ENCODE measurements at regions of chr4 and their contacts with region 1.

Region 1: DNA sequence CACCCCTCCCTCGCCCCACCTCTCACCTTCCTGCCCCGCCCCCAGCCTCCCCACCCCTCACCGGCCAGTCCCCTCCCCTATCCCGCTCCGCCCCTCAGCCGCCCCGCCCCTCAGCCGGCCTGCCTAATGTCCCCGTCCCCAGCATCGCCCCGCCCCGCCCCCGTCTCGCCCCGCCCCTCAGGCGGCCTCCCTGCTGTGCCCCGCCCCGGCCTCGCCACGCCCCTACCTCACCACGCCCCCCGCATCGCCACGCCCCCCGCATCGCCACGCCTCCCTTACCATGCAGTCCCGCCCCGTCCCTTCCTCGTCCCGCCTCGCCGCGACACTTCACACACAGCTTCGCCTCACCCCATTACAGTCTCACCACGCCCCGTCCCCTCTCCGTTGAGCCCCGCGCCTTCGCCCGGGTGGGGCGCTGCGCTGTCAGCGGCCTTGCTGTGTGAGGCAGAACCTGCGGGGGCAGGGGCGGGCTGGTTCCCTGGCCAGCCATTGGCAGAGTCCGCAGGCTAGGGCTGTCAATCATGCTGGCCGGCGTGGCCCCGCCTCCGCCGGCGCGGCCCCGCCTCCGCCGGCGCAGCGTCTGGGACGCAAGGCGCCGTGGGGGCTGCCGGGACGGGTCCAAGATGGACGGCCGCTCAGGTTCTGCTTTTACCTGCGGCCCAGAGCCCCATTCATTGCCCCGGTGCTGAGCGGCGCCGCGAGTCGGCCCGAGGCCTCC is at the starts of genes HTT and HTT-AS:
- DNase-seq: peak; percentile 60
- ATAC-seq: peak; percentile 95
- H3K4me3 ChIP-seq: peak within 1 kb of the TSS; percentile 84 to 85
- H3K27ac ChIP-seq: peak within 1 kb of the TSS; percentile 74
- H3K4me1 ChIP-seq: peaks cover 11% of the 10 kb centered on the region; the same call in 1 of the 2 replicates
- H3K27me3 ChIP-seq: no peaks in the 10 kb centered on the region
- CTCF ChIP-seq: no peak
- total RNA-seq, gene HTT: 24.7 TPM
- total RNA-seq, gene HTT-AS: not detected

Region 2: DNA sequence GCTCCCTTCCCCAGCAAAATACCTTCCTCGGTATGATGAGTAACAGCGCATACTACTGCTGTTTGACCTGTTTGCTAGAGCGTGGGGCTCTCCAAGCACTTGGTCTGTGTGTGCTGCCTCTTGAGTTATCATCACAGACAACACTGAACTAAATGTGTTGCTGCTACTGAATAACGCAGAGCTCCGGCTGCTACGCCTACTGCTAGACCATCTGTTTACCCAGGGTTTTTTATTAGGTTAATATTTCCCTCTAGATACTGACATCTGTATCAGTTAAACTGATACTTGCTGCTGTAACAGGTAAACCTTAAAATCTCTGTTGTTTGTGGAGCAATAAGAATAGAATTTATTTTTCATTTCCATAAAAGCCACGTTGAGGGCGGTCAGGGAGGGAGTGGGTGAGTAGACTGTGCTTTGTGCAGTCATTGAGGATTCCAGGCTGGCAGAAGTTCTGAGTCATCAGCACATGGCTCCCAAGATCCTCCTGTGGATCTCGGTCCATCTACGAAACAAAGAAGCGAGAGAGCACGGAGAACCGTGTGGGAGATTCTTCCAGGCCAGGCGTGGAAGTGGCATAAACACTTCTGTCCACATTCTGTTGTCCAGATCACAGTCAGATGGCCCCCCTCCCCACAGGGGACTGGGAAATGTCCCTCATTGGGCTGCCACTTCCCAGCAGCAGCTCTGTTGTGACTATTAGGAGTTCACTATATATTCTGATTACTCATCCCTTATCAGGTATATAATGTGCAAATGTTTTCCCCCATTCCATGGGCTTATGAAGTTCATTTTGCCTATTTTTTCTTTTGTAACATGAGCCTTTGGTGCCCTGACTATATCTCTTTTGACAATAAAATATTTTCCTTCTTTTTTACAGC is 96.8 kb before region 1 on chr4:
- CTCF ChIA-PET with region 1: no interaction called
- POLR2A ChIA-PET with region 1: interaction called, 10 read pairs
- in situ Hi-C with region 1: no loop called
- intact Hi-C with region 1: no loop called
- DNase-seq: no peak
- ATAC-seq: no peak
- H3K4me3 ChIP-seq: no peak overlapping the region
- H3K27ac ChIP-seq: no peak overlapping the region
- H3K4me1 ChIP-seq: no peaks in the 10 kb centered on the region
- H3K27me3 ChIP-seq: no peaks in the 10 kb centered on the region
- CTCF ChIP-seq: no peak

Region 3: DNA sequence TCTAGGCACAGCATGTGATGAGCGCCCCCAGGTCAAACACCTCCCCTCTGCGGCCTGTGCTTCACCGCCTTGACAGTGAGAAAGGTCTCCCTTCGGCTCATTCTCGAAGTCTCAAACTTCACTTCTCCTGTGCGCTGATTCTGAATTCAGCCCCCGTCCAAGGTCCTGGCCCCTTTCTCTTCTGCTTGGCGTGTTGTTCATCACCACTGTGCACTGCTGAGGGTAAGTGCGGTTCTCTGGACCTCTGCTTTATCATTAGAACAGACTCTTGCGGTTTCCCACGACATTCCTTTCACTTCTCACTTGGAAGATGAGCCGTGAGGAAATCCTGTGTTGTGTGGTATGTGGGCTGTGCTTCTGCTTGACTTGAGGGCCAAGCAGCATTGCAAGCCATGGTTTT is 11.8 kb before region 1 on chr4:
- CTCF ChIA-PET with region 1: no interaction called
- POLR2A ChIA-PET with region 1: no interaction called
- in situ Hi-C with region 1: no loop called
- intact Hi-C with region 1: no loop called
- DNase-seq: no peak
- ATAC-seq: no peak
- H3K4me3 ChIP-seq: no peak overlapping the region
- H3K27ac ChIP-seq: no peak overlapping the region
- H3K4me1 ChIP-seq: no peaks in the 10 kb centered on the region
- H3K27me3 ChIP-seq: no peaks in the 10 kb centered on the region
- CTCF ChIP-seq: no peak

Region 4: GRCh38 chr4:3305598-3306371 is 231.5 kb after region 1 on chr4:
- CTCF ChIA-PET with region 1: no interaction called
- POLR2A ChIA-PET with region 1: no interaction called
- in situ Hi-C with region 1: no loop called
- intact Hi-C with region 1: no loop called
- DNase-seq: no peak
- ATAC-seq: no peak
- H3K4me3 ChIP-seq: no peak overlapping the region
- H3K27ac ChIP-seq: no peak overlapping the region
- H3K4me1 ChIP-seq: no peaks in the 10 kb centered on the region
- H3K27me3 ChIP-seq: no peaks in the 10 kb centered on the region
- CTCF ChIP-seq: no peak

Region 5: GRCh38 chr4:3791978-3792542 is 717.8 kb after region 1 on chr4:
- CTCF ChIA-PET with region 1: no interaction called
- POLR2A ChIA-PET with region 1: no interaction called
- in situ Hi-C with region 1: no loop called
- intact Hi-C with region 1: no loop called
- DNase-seq: no peak
- ATAC-seq: no peak
- H3K4me3 ChIP-seq: no peak overlapping the region
- H3K27ac ChIP-seq: no peak overlapping the region
- H3K4me1 ChIP-seq: no peaks in the 10 kb centered on the region
- H3K27me3 ChIP-seq: no peaks in the 10 kb centered on the region
- CTCF ChIP-seq: no peak

Region 6: GRCh38 chr4:3851211-3851610 is 777.0 kb after region 1 on chr4:
- CTCF ChIA-PET with region 1: no interaction called
- POLR2A ChIA-PET with region 1: no interaction called
- in situ Hi-C with region 1: no loop called
- intact Hi-C with region 1: no loop called
- DNase-seq: no peak
- ATAC-seq: no peak
- H3K4me3 ChIP-seq: no peak overlapping the region
- H3K27ac ChIP-seq: no peak overlapping the region
- H3K4me1 ChIP-seq: no peaks in the 10 kb centered on the region
- H3K27me3 ChIP-seq: peaks cover 2% of the 10 kb centered on the region; the same call in 1 of the 2 replicates
- CTCF ChIP-seq: no peak

Measured in Panc1 (cell line).